ENCODE measurements at regions of chr5 and their contacts with region 1.

Region 1: DNA sequence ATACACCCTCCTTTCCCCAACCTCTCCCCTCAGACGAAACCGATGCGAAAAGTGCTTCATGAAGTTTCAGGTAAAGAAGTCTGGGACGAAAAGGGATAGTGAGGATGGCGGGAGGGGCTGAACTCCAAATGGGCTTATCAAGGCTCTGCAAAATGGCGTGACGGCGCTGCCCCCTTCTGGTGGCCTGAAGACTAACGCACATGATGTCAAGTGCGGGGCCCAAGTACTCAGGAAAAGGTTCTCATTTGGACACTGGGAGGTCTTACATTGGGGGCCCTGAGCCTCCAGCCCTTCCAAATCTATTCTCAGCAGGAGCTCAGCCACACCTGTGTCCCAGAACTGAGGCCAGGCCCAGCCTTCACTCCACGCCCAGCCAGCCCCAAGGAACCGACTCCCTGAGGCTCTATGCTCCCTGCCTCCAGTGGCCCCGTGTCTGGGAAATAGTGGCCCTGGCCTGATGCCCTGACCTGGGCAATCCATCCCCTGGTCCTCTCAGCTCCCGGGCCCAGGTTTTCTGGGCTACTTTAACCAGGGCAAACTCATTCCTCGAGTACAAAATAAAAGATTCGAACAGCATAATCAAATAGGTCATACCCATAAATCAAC is 119.9 kb downstream of the KCNIP1 start:
- DNase-seq: peak; percentile 69
- H3K4me3 ChIP-seq: no peak overlapping the region
- H3K27ac ChIP-seq: no peak overlapping the region
- H3K4me1 ChIP-seq: no peaks in the 10 kb centered on the region
- H3K27me3 ChIP-seq: peaks cover 44% of the 10 kb centered on the region

Region 2: GRCh38 chr5:170444969-170445505 is 178.6 kb before region 1 on chr5:
- in situ Hi-C with region 1: loop called (anchors 5 kb)
- DNase-seq: no peak
- H3K4me3 ChIP-seq: no peak overlapping the region
- H3K27ac ChIP-seq: no peak overlapping the region
- H3K4me1 ChIP-seq: no peaks in the 10 kb centered on the region
- H3K27me3 ChIP-seq: peaks cover 15% of the 10 kb centered on the region; the same call in 1 of the 2 replicates